Body of pancreas (tissue), 4 donors: ENCODE measurements at regions of chr7 and their contacts with region 1.

Region 1: GRCh38 chr7:101140339-101140699 is 13.4 kb downstream of the SERPINE1 start:
- DNase-seq: no peak
- ATAC-seq: no peak
- H3K4me3 ChIP-seq: no peak overlapping the region
- H3K27ac ChIP-seq: no peak overlapping the region
- H3K4me1 ChIP-seq: peaks cover 28% of the 10 kb centered on the region
- H3K27me3 ChIP-seq: no peaks in the 10 kb centered on the region
- CTCF ChIP-seq: no peak
- POLR2A ChIP-seq: no peak

Region 2: GRCh38 chr7:101287032-101287431 is 146.7 kb after region 1 on chr7:
- intact Hi-C with region 1: loop called (anchors 5 kb)
- DNase-seq: no peak
- ATAC-seq: no peak
- H3K4me3 ChIP-seq: no peak overlapping the region
- H3K27ac ChIP-seq: no peak overlapping the region
- H3K4me1 ChIP-seq: peaks cover 6% of the 10 kb centered on the region
- H3K27me3 ChIP-seq: peaks cover 0 to 5% of the 10 kb centered on the region in 2 donors
- CTCF ChIP-seq: no peak
- POLR2A ChIP-seq: no peak